ENCODE measurements at regions of chr12 and their contacts with region 1.

Region 1: DNA sequence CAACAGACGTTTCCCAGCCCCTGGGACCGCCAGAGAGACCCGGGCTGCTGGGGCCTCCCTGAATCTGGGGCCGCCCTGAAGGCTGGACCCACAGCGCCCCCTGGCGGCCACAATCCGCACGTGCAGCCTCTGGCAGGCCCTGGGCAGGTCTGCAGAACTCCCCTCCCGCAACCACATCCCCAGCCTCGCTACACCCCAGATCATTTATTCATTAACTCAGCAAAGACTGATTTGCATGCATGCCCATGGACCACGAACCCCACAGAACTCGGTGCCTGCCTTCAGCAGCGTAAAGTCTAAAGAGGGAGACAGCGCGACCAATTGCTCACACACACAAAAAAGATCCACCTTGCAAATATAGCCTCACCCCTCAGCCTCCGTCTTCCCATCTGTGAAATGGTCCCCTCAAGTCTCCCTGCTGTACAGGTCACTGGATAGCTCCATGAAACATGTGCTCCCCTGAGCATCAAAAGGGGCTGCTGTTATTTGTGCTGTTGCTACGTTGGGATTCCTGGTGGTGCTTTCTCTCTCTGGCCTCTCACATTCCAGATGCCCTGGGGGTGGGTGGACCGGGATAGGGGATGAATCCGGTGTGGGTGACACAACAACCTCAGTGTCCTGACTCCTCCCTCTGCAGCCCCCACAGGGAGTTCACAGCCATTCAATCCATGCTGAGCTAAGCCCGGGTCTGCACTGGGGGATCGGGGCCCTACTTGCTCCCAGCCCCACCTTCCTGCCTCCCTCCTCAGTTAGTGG is 96.4 kb downstream of the SCARB1 start:
- DNase-seq: peak; percentile 88
- H3K4me3 Mint-ChIP-seq: no peak overlapping the region
- H3K27ac Mint-ChIP-seq: no peak overlapping the region
- H3K4me1 Mint-ChIP-seq: peaks cover 21% of the 10 kb centered on the region
- H3K27me3 Mint-ChIP-seq: peaks cover 9% of the 10 kb centered on the region

Region 2: GRCh38 chr12:124036674-124037109 is 730.6 kb before region 1 on chr12:
- CTCF ChIA-PET with region 1: interaction called, 11 read pairs
- intact Hi-C with region 1: loop called (anchors 1 kb)
- DNase-seq: peak; percentile 59
- H3K4me3 Mint-ChIP-seq: no peak overlapping the region
- H3K27ac Mint-ChIP-seq: no peak overlapping the region
- H3K4me1 Mint-ChIP-seq: no peaks in the 10 kb centered on the region
- H3K27me3 Mint-ChIP-seq: peaks cover 2% of the 10 kb centered on the region

Region 3: DNA sequence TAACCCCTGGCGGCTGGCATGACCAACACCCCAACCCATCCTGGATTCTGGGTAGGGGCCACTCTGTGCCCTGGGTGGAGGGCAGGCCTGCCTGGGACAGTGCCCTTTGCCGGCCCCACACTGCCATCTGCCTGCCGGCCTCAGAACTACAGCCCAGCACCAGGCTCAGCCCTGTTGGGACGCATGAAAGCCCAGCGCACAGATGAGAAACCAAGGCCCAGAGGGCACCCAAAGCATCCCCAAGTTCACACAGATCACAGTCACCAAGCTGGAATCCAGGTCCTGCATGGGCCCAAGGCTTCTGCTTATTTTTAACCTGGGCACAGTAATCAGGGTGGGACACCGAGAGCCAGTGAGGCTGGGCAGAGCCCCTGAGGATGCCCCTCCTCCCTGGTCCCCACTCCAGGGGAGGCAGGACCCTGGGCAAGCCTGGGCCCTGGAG is 446.2 kb before region 1 on chr12:
- CTCF ChIA-PET with region 1: no interaction called
- intact Hi-C with region 1: loop called (anchors 1 kb)
- DNase-seq: peak; percentile 81
- H3K4me3 Mint-ChIP-seq: no peak overlapping the region
- H3K27ac Mint-ChIP-seq: no peak overlapping the region
- H3K4me1 Mint-ChIP-seq: no peaks in the 10 kb centered on the region
- H3K27me3 Mint-ChIP-seq: no peaks in the 10 kb centered on the region

Region 4: DNA sequence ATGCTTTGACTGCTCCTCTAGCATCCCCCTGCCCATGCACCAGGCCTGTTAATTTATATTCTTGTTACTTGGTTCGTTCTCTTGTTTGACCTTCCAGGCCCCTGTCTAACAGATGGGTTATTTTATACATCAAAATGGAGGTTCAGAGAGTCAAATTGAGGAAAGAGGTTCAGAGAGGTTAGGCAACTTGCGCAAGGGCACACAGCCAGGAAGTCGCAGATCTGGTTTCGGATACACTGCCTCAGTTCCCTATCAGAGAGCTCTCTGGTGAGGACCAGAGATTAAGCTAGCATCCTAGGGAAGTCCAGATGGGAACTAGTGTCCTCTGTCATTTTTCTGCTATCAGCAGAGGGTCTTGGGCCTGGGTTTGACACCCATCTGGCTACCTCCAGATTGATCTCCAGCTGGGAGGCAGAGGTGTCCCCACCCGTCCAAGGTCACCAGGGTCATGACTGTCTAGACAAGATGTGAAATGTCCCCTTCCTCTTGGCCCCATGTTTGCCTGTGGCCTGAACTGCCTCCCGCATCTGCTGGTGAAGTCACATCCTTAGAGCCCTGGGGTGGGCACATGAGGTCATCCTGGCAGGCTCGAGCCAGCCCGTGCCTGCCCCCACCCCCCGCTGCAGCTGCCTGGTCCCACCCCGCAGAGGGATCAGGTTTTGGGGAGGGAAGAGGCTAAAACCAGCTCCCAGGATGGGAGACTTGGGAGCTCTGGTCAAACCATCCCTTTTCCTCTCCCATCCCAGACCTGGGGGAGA is 115.5 kb before region 1 on chr12:
- CTCF ChIA-PET with region 1: no interaction called
- intact Hi-C with region 1: no loop called
- DNase-seq: no peak
- H3K4me3 Mint-ChIP-seq: no peak overlapping the region
- H3K27ac Mint-ChIP-seq: no peak overlapping the region
- H3K4me1 Mint-ChIP-seq: peaks cover 6% of the 10 kb centered on the region
- H3K27me3 Mint-ChIP-seq: peaks cover 4% of the 10 kb centered on the region

Region 5: DNA sequence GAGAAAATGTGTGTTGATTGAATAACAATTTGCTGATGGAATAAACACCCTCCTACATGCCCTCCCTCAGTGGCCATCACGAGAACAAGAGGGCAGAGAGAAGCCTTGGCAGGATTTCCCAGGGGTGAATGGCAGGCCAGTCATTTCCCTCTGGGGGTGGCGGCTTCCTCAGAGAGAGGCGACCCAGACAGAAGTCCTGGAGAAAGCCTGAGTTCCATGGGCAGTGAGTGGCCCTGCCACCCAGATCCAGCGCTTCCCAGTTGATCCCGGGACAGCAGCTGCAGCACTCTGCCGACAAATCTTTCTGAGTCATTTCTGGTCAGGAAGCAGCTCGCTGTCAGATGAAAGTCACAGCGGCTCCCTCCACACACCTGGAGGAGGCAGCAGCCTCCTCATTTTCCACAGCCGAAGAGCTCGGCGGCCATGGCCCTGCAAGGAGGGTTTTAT is 26.5 kb before region 1 on chr12:
- CTCF ChIA-PET with region 1: interaction called, 32 read pairs
- intact Hi-C with region 1: loop called (anchors 1 kb)
- DNase-seq: peak; percentile 64
- H3K4me3 Mint-ChIP-seq: no peak overlapping the region
- H3K27ac Mint-ChIP-seq: no peak overlapping the region
- H3K4me1 Mint-ChIP-seq: peaks cover 30% of the 10 kb centered on the region
- H3K27me3 Mint-ChIP-seq: peaks cover 3% of the 10 kb centered on the region